IMR-90 (cell line): ENCODE measurements at regions of chr1 and their contacts with region 1.

Region 1: DNA sequence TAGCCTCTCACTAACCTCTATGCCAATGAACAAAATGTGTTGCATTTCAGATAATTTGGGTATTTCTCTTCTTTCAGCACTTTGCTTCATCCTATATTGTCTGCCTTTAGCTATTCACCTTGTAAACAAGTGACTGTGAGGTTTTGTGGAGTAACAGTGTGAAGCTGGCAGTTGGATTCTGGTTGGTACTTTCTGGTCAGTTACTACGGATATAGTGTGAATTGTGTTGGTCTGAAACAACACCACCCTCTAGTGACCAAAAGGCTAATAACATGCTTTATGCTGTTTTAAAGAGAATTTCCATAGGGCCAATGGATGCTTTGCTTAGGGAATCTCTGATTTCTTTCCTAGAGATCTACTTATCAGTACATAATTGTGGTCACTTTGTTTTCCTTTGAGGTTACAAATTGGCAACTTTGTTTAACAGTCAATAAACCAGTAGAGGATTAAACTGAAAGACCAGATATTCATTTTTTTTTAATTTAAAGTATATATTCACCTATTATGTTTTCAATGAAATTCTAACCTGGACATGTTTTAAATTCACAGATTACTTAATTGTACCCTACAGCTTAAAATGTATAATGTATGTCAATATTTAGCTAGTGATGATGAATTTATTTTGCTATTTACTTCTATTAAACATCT is 2.5 kb upstream of the PTGER3 start:
- DNase-seq: peak; percentile 72
- ATAC-seq: peak; percentile 82
- H3K4me3 ChIP-seq: no peak overlapping the region
- H3K27ac ChIP-seq: no peak overlapping the region
- H3K4me1 ChIP-seq: peaks cover 3% of the 10 kb centered on the region; the same call in 1 of the 2 replicates
- H3K27me3 ChIP-seq: peaks cover 35% of the 10 kb centered on the region
- CTCF ChIP-seq: peak; percentile 86
- POLR2A ChIP-seq: no peak
- RAD21 ChIP-seq: peak; percentile 80

Region 2: DNA sequence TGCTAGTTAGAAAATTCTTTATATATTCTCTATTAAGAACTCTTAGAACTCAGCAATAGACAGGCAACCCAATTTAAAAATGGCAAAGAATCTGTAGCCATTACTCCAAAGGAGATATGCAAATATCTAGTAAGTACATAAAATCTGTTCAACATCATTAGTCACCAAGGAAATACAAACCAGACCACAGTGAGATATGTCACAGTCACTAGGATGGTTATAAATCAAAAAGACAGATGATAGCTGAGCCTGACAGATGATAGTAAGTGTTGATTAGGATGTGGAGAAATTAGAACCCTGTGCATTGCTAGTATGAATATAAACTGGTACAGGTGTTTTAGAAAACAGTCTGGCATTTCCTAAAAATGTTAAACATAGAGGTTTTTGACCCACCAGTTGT is 802.3 kb before region 1 on chr1:
- CTCF ChIA-PET with region 1: no interaction called
- POLR2A ChIA-PET with region 1: no interaction called
- dilution Hi-C with region 1: no loop called
- in situ Hi-C with region 1: loop called (anchors 10 kb)
- intact Hi-C with region 1: no loop called
- DNase-seq: no peak
- ATAC-seq: no peak
- H3K4me3 ChIP-seq: no peak overlapping the region
- H3K27ac ChIP-seq: no peak overlapping the region
- H3K4me1 ChIP-seq: no peaks in the 10 kb centered on the region
- H3K27me3 ChIP-seq: no peaks in the 10 kb centered on the region
- CTCF ChIP-seq: no peak
- POLR2A ChIP-seq: no peak
- RAD21 ChIP-seq: no peak

Region 3: DNA sequence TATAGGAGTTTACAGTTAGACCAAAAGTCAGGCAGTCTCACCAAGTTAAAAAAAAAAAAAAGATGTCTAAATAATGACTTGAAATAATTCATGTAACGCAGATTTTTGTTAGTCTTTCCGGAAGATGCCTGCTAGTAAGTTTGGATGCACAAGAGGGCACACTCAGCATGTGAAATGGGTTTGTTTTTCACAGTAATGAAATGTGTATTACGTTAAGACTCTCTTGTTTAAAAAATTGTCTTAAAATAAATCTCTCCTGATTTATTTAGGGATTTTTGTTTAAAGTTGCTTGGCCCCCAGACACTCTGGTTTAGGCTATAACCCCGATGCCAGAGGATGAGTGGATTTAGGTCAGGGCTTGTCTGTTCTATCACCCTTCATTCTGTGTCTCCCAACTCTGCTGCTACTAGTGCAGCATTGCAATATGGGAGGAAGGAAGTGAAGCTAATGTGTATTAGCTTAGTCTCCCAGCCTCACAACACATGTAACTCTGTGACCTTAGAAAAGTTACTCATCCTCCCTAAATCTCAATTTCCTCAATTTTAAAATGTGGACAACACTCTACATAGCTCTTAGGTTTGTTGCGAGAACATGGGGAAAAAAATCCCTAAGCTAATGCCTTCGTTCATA is 613.3 kb before region 1 on chr1:
- CTCF ChIA-PET with region 1: no interaction called
- POLR2A ChIA-PET with region 1: no interaction called
- dilution Hi-C with region 1: no loop called
- in situ Hi-C with region 1: no loop called
- intact Hi-C with region 1: loop called (anchors 2 kb)
- DNase-seq: peak; percentile 43
- ATAC-seq: peak; percentile 60
- H3K4me3 ChIP-seq: no peak overlapping the region
- H3K27ac ChIP-seq: no peak overlapping the region
- H3K4me1 ChIP-seq: no peaks in the 10 kb centered on the region
- H3K27me3 ChIP-seq: no peaks in the 10 kb centered on the region
- CTCF ChIP-seq: peak; percentile 44
- POLR2A ChIP-seq: no peak
- RAD21 ChIP-seq: peak; percentile 55

Region 4: GRCh38 chr1:70528590-70529333 is 521.3 kb before region 1 on chr1:
- CTCF ChIA-PET with region 1: interaction called, 6 read pairs
- POLR2A ChIA-PET with region 1: no interaction called
- dilution Hi-C with region 1: no loop called
- in situ Hi-C with region 1: loop called (anchors 5 kb)
- intact Hi-C with region 1: loop called (anchors 1 kb)
- DNase-seq: peak; percentile 33
- ATAC-seq: peak; percentile 87
- H3K4me3 ChIP-seq: no peak overlapping the region
- H3K27ac ChIP-seq: no peak overlapping the region
- H3K4me1 ChIP-seq: no peaks in the 10 kb centered on the region
- H3K27me3 ChIP-seq: peaks cover 1% of the 10 kb centered on the region; the same call in 1 of the 2 replicates
- CTCF ChIP-seq: peak; percentile 55
- POLR2A ChIP-seq: no peak
- RAD21 ChIP-seq: peak; percentile 43

Region 5: GRCh38 chr1:70685300-70686241 is 364.5 kb before region 1 on chr1:
- CTCF ChIA-PET with region 1: interaction called, 6 read pairs
- POLR2A ChIA-PET with region 1: no interaction called
- dilution Hi-C with region 1: no loop called
- in situ Hi-C with region 1: loop called (anchors 5 kb)
- intact Hi-C with region 1: loop called (anchors 1 kb)
- DNase-seq: peak; percentile 48
- ATAC-seq: peak; percentile 70
- H3K4me3 ChIP-seq: no peak overlapping the region
- H3K27ac ChIP-seq: no peak overlapping the region
- H3K4me1 ChIP-seq: no peaks in the 10 kb centered on the region
- H3K27me3 ChIP-seq: no peaks in the 10 kb centered on the region
- CTCF ChIP-seq: peak; percentile 65
- POLR2A ChIP-seq: no peak
- RAD21 ChIP-seq: peak; percentile 53